CD8-positive, alpha-beta T cell (primary cell): ENCODE measurements at regions of chr2 and their contacts with region 1.

Region 1: DNA sequence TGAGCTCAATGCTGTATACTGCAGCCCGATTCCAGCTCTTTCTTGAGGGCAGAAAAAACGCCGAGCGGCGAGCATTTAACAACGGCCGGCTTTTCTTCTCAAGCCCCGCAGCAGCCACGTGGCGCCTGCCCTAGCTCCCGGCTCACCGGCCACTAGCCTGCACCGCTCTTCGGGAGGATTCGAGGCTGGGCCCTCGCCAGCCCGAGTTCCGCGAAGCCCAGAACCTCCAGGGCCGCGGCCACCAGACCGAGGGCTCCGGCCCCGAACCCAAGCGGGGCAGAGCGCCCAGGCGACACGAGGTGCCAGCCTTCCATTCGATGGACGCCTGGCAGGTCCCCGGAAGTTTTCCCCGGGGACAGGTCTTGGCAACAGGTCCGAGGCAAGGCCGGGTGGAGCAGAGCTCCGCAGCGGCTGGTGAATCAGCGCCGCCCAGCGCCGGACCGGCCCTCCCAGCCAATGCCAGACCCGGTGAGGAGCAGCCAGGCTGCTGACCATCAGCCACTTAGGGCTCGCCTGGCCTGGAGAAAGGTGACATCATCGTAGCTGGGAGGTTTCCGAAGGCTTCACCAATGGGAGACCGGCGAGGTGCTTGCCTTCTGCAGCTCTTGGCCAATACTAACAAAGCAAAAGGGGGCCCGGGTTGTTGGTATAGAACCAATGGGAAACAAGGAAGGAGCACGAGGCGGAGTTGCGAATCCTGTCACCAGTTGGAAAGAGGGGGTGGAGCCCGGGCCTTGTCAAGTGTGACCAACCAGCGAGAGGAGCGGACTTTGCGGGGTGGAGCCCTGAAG is 544 bp upstream of the MXD1 start:
- DNase-seq: peak in 7 of 9 experiments; percentile 99 to 100 (median 100)
- ATAC-seq: peak; percentile 93
- H3K4me3 ChIP-seq: peak overlapping the region; percentile 87 to 89
- H3K4me3 Mint-ChIP-seq: peak overlapping the region; percentile 85
- H3K27ac ChIP-seq: peak overlapping the region; percentile 91 to 97
- H3K27ac Mint-ChIP-seq: peak overlapping the region; percentile 92
- H3K4me1 ChIP-seq: peaks cover 21% of the 10 kb centered on the region
- H3K4me1 Mint-ChIP-seq: peaks cover 30% of the 10 kb centered on the region
- H3K27me3 ChIP-seq: no peaks in the 10 kb centered on the region
- H3K27me3 Mint-ChIP-seq: no peaks in the 10 kb centered on the region
- CTCF ChIP-seq: no peak

Region 2: DNA sequence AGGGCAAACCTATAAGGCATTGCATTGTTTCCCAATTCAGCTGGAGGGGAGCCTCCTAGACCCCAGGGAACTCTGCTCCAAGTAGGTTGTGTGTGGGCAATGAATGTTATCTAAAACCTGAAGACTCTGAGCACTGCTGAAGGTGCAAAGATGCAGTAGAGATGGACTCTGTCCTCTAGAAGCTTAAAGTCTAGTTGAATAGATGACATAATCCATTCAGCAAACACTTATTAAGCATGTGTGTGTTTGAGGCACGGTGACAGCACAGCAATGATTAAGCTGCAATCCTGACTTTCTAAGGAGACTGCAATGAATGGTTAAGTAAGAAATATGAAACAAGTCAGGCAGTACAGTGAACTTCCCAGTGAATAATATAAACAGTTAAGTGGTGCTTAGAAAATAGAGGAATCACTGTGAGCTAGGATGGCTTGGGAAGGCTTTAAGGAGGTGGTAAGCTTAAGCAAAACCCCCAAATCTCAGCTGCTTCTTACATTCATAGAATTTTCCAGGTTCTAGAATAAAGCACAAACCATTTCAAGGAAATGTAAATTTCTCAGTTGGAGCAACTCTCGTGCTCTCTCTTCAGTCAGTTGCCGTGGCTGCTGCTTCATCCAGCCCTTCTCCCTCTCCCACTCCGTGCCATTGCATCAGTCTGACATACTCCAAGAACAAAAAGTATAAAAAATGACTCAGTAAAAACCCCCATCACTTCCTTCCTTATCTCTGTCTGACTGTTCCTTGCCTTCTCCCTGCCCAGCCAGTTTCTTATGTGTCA is 19.7 kb after region 1 on chr2:
- CTCF ChIA-PET with region 1: interaction called, 3 read pairs
- POLR2A ChIA-PET with region 1: no interaction called
- intact Hi-C with region 1: loop called in 1 of 2 experiments (anchors 2 kb)
- DNase-seq: no peak
- ATAC-seq: no peak
- H3K4me3 ChIP-seq: no peak overlapping the region
- H3K4me3 Mint-ChIP-seq: no peak overlapping the region
- H3K27ac ChIP-seq: no peak overlapping the region
- H3K27ac Mint-ChIP-seq: no peak overlapping the region
- H3K4me1 ChIP-seq: peaks cover 6% of the 10 kb centered on the region
- H3K4me1 Mint-ChIP-seq: peaks cover 26% of the 10 kb centered on the region
- H3K27me3 ChIP-seq: no peaks in the 10 kb centered on the region
- H3K27me3 Mint-ChIP-seq: no peaks in the 10 kb centered on the region
- CTCF ChIP-seq: no peak

Region 3: GRCh38 chr2:70086838-70087701 is 172.7 kb after region 1 on chr2 and contains the start of gene PCBP1:
- CTCF ChIA-PET with region 1: interaction called, 9 read pairs
- POLR2A ChIA-PET with region 1: interaction called, 57 read pairs
- intact Hi-C with region 1: loop called (anchors 1 to 2 kb)
- DNase-seq: peak; percentile 95 to 100 (median 98)
- ATAC-seq: peak; percentile 60
- H3K4me3 ChIP-seq: peak within 1 kb of the TSS; percentile 95 to 98
- H3K4me3 Mint-ChIP-seq: peak within 1 kb of the TSS; percentile 98
- H3K27ac ChIP-seq: peak within 1 kb of the TSS; percentile 99
- H3K27ac Mint-ChIP-seq: peak within 1 kb of the TSS; percentile 100
- H3K4me1 ChIP-seq: peaks cover 62% of the 10 kb centered on the region
- H3K4me1 Mint-ChIP-seq: peaks cover 69% of the 10 kb centered on the region
- H3K27me3 ChIP-seq: no peaks in the 10 kb centered on the region
- H3K27me3 Mint-ChIP-seq: no peaks in the 10 kb centered on the region
- CTCF ChIP-seq: no peak
- total RNA-seq, gene PCBP1: 239 to 255 TPM

Region 4: DNA sequence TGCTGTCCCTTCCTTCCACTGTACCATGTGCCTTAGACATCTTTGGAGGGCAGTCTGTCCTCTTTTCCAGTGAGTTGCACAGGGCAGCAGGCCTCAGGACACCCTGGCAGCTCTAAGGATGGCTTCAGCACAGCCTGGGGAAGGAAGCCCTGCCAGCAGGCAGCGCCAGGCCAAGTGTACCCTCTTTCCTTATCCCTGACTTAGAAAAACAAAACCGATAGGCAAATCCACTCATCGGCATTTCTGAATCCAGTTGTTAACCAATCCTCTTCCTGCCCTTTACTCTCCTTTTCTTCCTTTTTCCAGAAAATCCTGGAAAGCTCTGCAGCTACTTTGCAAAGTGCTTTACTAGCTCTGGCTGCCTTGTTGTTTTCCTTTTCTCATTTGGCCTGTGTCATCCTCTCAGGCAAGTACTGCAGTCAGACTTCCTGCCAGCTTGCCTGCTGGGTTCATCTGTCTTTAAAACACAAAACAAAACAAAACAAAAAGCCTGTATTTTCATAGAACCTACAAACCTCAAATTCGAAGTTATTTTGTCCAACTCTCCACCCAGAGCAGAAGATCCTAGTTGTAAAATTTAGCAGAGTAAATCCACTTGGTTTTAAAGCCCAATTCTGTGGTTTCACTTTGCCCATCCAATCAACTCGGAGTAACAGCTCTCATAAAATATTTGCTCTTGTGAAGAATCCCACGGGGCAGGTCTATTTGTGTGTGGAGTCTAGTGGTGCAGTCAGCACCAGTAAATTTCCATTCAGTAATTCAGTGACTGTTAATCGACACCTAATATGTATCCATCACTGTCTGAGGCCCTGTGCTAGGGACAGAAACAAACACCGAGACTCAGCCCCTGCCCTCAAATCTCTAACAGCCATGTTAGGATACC is 218.1 kb after region 1 on chr2:
- CTCF ChIA-PET with region 1: interaction called, 8 read pairs
- POLR2A ChIA-PET with region 1: interaction called, 17 read pairs
- intact Hi-C with region 1: no loop called
- DNase-seq: peak in 6 of 9 experiments; percentile 48 to 78 (median 60)
- ATAC-seq: peak; percentile 53
- H3K4me3 ChIP-seq: peak overlapping the region; percentile 29 to 49
- H3K4me3 Mint-ChIP-seq: peak overlapping the region; percentile 91
- H3K27ac ChIP-seq: peak overlapping the region; percentile 62 to 90
- H3K27ac Mint-ChIP-seq: peak overlapping the region; percentile 98
- H3K4me1 ChIP-seq: peaks cover 74% of the 10 kb centered on the region
- H3K4me1 Mint-ChIP-seq: peaks cover 75% of the 10 kb centered on the region
- H3K27me3 ChIP-seq: no peaks in the 10 kb centered on the region
- H3K27me3 Mint-ChIP-seq: no peaks in the 10 kb centered on the region
- CTCF ChIP-seq: no peak

Region 5: GRCh38 chr2:70190418-70191243 is 276.3 kb after region 1 on chr2 and contains the start of gene C2orf42:
- CTCF ChIA-PET with region 1: interaction called, 14 read pairs
- POLR2A ChIA-PET with region 1: interaction called, 22 read pairs
- intact Hi-C with region 1: loop called (anchors 1 kb)
- DNase-seq: peak; percentile 88 to 98 (median 95)
- ATAC-seq: peak; percentile 83
- H3K4me3 ChIP-seq: peak within 1 kb of the TSS; percentile 82 to 95
- H3K4me3 Mint-ChIP-seq: peak within 1 kb of the TSS; percentile 100
- H3K27ac ChIP-seq: peak within 1 kb of the TSS; percentile 88 to 99
- H3K27ac Mint-ChIP-seq: peak within 1 kb of the TSS; percentile 100
- H3K4me1 ChIP-seq: peaks cover 5% of the 10 kb centered on the region
- H3K4me1 Mint-ChIP-seq: peaks cover 24% of the 10 kb centered on the region
- H3K27me3 ChIP-seq: no peaks in the 10 kb centered on the region
- H3K27me3 Mint-ChIP-seq: peaks cover 2% of the 10 kb centered on the region
- CTCF ChIP-seq: no peak
- total RNA-seq, gene C2orf42: 14.7 to 16.8 TPM

Region 6: DNA sequence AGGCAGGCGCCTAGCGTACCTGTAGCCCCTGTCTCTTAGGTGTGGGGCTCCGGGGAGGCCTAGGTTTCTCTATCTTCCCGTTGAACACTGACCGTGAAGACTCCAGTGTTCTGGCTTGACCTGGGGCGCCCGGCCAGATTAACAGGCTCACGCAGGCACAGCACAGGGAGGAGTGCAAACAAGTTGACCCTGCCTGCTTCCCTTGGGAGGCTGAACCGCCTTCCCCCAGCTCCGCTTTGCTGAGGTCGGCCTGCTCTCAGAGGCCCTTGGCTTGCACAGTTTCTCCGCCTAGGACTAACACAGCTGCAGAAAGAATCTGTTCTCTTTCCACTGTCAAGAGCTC is 344.1 kb after region 1 on chr2:
- CTCF ChIA-PET with region 1: interaction called, 4 read pairs
- POLR2A ChIA-PET with region 1: interaction called, 15 read pairs
- intact Hi-C with region 1: no loop called
- DNase-seq: no peak
- ATAC-seq: no peak
- H3K4me3 ChIP-seq: peak overlapping the region; percentile 62 to 88
- H3K4me3 Mint-ChIP-seq: peak overlapping the region; percentile 86
- H3K27ac ChIP-seq: peak overlapping the region in 1 of 2 experiments; percentile 54
- H3K27ac Mint-ChIP-seq: peak overlapping the region; percentile 77
- H3K4me1 ChIP-seq: peaks cover 15% of the 10 kb centered on the region
- H3K4me1 Mint-ChIP-seq: peaks cover 42% of the 10 kb centered on the region
- H3K27me3 ChIP-seq: no peaks in the 10 kb centered on the region
- H3K27me3 Mint-ChIP-seq: no peaks in the 10 kb centered on the region
- CTCF ChIP-seq: no peak